Breast epithelium (tissue), 4 donors: ENCODE measurements at regions of chr18 and their contacts with region 1.

Region 1: DNA sequence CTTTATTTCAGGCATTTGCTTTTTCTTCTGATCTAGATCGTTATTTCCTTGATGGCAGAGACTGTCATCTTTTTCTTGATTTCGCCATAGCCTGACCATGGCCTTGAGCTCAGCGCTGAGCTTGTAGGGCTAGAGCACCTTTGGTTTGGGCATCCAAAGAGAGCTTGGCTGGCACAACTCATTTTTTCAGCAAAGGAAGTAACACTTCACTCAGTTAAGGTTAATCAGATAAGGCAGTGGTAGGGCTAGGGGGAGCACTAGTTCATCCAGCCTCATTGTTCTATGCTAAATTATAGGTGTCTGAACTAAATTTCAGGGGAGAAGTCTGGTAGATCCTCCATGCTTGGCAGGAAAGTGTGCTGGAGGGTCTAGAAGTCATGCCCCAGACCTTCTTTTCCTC is 125.0 kb downstream of the SETBP1 start:
- DNase-seq: no peak
- H3K4me3 ChIP-seq: no peak overlapping the region
- H3K27ac ChIP-seq: no peak overlapping the region
- H3K4me1 ChIP-seq: no peaks in the 10 kb centered on the region
- H3K27me3 ChIP-seq: no peaks in the 10 kb centered on the region
- CTCF ChIP-seq: no peak
- POLR2A ChIP-seq: no peak

Region 2: DNA sequence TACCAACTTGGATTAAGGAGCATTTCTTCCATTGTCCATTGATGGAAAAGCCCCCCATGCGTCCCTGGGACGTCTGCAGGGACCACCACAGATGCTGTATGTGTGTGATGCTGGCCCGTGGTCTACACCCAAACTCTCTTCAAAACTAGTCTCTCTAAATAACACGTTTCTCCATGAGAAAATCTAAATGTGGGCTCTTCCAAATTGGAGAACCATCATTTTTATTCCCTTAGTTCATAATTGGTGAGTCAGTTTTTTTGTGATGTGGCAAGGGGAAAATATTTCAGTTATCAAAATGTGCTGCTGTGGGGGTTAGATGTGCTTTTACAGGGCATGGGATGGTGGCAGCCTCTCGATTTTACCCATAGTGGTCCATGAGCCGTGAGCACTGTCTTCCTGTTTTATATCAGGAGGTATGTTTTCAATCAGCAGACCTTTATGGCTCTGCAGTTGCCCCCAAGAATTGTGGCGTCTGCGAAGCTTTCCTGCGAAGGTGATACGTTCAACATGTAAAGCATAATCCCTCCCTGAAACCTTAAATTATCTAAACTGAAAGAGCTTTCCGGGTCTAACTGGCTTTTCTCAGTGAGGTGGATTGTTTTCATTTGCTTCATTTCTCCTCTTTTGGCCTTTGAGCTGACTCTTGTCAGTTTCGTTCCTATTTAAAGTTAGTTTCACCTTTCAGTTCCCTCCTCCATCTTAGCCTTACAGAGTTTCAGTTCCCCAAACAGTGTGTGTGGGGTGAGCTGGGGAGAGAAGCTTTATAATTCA is 46.6 kb before region 1 on chr18:
- intact Hi-C with region 1: no loop called
- DNase-seq: no peak
- H3K4me3 ChIP-seq: no peak overlapping the region
- H3K27ac ChIP-seq: no peak overlapping the region
- H3K4me1 ChIP-seq: peaks cover 0 to 12% of the 10 kb centered on the region in 2 donors
- H3K27me3 ChIP-seq: no peaks in the 10 kb centered on the region
- CTCF ChIP-seq: no peak
- POLR2A ChIP-seq: no peak

Region 3: GRCh38 chr18:44882163-44882868 is 76.7 kb after region 1 on chr18:
- intact Hi-C with region 1: loop called (anchors 2 kb)
- DNase-seq: no peak
- H3K4me3 ChIP-seq: no peak overlapping the region
- H3K27ac ChIP-seq: no peak overlapping the region
- H3K4me1 ChIP-seq: no peaks in the 10 kb centered on the region
- H3K27me3 ChIP-seq: no peaks in the 10 kb centered on the region
- CTCF ChIP-seq: no peak
- POLR2A ChIP-seq: no peak